Heart left ventricle (tissue), 16 donors: ENCODE measurements at regions of chr19 and their contacts with region 1.

Region 1: GRCh38 chr19:23470873-23471545 is 75.7 kb upstream of the ZNF91 start:
- DNase-seq: peak in 1 of 5 donors; percentile 27
- ATAC-seq: no peak
- H3K4me3 ChIP-seq: peak overlapping the region in 11 of 12 donors; percentile 5 to 57 (median 38)
- H3K27ac ChIP-seq: no peak overlapping the region
- H3K4me1 ChIP-seq: peaks cover 0 to 5% (median 0%) of the 10 kb centered on the region in 12 donors
- H3K27me3 ChIP-seq: peaks cover 0 to 43% (median 5%) of the 10 kb centered on the region in 9 donors
- CTCF ChIP-seq: no peak
- POLR2A ChIP-seq: no peak

Region 2: DNA sequence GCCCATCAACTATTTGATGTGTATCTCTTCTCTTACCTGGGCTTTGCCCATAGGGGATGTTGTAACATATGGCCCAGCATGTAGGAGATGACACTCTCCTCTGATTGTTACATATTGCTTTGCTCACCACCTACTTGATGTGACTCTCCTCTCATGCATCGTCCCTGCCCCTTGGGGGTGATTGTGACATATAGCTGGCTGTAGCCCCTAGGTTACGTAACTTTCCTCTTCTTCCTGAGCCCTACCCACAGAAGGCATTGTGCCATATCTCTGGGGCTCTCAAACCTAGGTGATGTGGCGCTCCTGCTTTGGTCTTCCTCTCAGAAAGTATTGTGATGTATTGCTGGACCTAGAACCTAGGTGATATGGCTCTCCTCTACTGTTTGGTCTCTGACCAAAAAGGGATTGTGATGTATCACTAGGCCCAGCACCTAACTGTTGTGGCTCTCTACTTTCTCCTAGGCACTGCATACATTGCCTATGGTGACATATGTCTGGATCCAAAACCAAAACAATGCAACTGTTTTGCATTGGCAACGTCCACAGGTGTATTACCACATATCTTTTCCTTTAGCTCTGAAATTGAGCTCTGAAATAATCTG is 149.0 kb before region 1 on chr19:
- intact Hi-C with region 1: loop called in 7 of 10 experiments (anchors 1 to 5 kb)
- DNase-seq: no peak
- ATAC-seq: peak in 2 of 4 donors; percentile 13 to 19
- H3K4me3 ChIP-seq: no peak overlapping the region
- H3K27ac ChIP-seq: no peak overlapping the region
- H3K4me1 ChIP-seq: no peaks in the 10 kb centered on the region
- H3K27me3 ChIP-seq: no peaks in the 10 kb centered on the region
- CTCF ChIP-seq: no peak
- POLR2A ChIP-seq: no peak